ENCODE measurements at regions of chrX and their contacts with region 1.

Region 1: DNA sequence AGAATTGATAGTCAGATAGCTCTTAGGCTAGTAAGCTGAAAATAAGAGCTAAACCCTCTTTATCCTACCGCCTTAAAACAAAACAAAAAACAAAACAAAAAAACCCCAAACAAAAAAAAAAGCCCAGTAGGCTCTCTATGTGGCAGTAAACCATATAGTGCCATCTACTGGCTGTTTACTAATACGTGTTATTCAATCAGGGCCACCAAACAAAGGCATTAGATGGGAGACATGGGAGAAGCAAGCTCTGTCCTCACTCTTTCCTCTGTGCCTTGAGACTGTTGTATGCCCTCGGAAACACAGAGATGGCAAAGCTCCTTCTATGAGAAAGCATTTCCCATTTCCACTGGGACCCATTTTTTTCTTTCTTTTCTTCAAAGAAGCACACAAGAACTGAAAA is 148.8 kb upstream of the MID1 start:
- DNase-seq: peak; percentile 12
- H3K4me3 ChIP-seq: no peak overlapping the region
- H3K27ac ChIP-seq: no peak overlapping the region
- H3K4me1 ChIP-seq: peaks cover 4% of the 10 kb centered on the region
- H3K27me3 ChIP-seq: no peaks in the 10 kb centered on the region
- CTCF ChIP-seq: peak; percentile 36 to 61

Region 2: DNA sequence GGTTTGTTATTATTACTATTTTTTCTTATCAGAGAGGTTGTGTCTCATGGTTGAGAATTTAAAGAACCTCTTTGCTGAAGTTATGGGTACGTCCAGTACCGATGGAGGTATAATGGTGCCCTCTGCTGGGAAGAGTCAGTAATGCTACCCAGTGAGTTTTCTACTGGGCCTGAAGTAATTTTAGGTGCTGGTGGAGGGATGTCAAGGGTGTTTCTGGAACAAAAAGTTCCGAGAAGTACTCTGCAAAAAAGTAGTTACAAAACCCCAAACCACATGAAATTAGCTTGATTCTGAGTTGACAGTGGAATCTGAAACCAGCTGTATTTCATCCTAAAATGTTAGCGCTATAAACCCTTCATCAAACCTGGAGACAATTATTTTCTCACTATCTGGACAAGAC is 46.3 kb before region 1 on chrX:
- CTCF ChIA-PET with region 1: no interaction called
- dilution Hi-C with region 1: no loop called
- in situ Hi-C with region 1: no loop called
- intact Hi-C with region 1: loop called (anchors 2 kb)
- DNase-seq: peak; percentile 23
- H3K4me3 ChIP-seq: no peak overlapping the region
- H3K27ac ChIP-seq: no peak overlapping the region
- H3K4me1 ChIP-seq: no peaks in the 10 kb centered on the region
- H3K27me3 ChIP-seq: no peaks in the 10 kb centered on the region
- CTCF ChIP-seq: peak; percentile 75 to 83

Region 3: GRCh38 chrX:10811111-10811510 is 41.9 kb after region 1 on chrX:
- CTCF ChIA-PET with region 1: no interaction called
- dilution Hi-C with region 1: no loop called
- in situ Hi-C with region 1: no loop called
- intact Hi-C with region 1: no loop called
- DNase-seq: no peak
- H3K4me3 ChIP-seq: no peak overlapping the region
- H3K27ac ChIP-seq: no peak overlapping the region
- H3K4me1 ChIP-seq: no peaks in the 10 kb centered on the region
- H3K27me3 ChIP-seq: no peaks in the 10 kb centered on the region
- CTCF ChIP-seq: no peak

Region 4: DNA sequence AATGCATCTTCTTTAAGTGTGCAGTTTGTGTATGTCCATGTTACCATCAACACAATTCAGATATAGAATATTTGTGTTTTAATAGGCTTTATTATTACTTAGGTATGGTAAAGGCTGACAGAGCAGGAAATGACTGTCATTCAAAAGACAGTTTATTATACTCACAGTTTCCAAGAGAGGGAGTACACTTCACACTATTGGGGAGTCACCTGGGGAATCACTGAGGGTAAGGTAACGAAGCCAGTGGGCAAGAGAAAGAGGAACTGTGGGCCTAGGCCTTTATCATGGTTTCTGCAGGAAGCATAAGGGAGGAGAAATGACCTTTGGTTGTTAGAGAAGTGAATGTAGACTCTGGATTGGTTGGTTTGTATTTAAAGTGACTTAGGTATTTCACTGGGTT is 106.8 kb after region 1 on chrX:
- CTCF ChIA-PET with region 1: no interaction called
- dilution Hi-C with region 1: no loop called
- in situ Hi-C with region 1: no loop called
- intact Hi-C with region 1: no loop called
- DNase-seq: no peak
- H3K4me3 ChIP-seq: no peak overlapping the region
- H3K27ac ChIP-seq: no peak overlapping the region
- H3K4me1 ChIP-seq: no peaks in the 10 kb centered on the region
- H3K27me3 ChIP-seq: no peaks in the 10 kb centered on the region
- CTCF ChIP-seq: no peak

Region 5: GRCh38 chrX:11309220-11309619 is 540.0 kb after region 1 on chrX:
- CTCF ChIA-PET with region 1: no interaction called
- dilution Hi-C with region 1: no loop called
- in situ Hi-C with region 1: no loop called
- intact Hi-C with region 1: no loop called
- DNase-seq: no peak
- H3K4me3 ChIP-seq: no peak overlapping the region
- H3K27ac ChIP-seq: no peak overlapping the region
- H3K4me1 ChIP-seq: no peaks in the 10 kb centered on the region
- H3K27me3 ChIP-seq: no peaks in the 10 kb centered on the region
- CTCF ChIP-seq: no peak